Activated CD4-positive, alpha-beta memory T cell treated with anti-CD3 and anti-CD28 coated beads, Interleukin-2, amount 10 ng/mL, durations not matched to agents 7 days and 5 days (primary cell): ENCODE measurements at regions of chr3 and their contacts with region 1.

Region 1: DNA sequence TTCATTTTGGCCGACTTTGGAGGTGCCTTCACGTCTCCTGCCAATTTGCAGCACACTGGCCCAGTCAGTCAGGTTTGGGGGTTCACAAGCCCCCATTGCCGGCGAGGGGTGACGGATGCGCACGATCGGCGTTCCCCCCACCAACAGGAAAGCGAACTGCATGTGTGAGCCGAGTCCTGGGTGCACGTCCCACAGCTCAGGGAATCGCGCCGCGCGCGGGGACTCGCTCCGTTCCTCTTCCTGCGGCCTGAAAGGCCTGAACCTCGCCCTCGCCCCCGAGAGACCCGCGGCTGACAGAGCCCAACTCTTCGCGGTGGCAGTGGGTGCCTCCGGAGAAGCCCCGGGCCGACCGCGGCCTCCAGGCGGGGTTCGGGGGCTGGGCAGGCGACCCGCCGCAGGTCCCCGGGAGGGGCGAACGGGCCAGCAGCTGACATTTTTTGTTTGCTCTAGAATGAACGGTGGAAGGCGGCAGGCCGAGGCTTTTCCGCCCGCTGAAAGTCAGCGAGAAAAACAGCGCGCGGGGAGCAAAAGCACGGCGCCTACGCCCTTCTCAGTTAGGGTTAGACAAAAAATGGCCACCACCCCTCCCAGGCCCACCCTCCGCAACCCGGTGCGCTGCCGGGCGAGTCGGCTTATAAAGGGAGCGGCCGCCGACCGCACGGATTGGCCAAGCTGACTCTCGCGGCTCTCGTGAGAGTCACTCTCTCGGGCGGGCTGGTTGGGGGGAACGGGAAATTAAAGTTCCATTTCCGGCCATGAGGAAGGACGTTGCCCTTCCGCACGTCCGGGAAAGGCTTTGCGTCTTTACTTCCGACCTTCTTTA is at the start of gene TERC:
- DNase-seq: peak; percentile 92
- H3K4me3 Mint-ChIP-seq: peak within 1 kb of the TSS; percentile 96
- H3K27ac Mint-ChIP-seq: peak within 1 kb of the TSS; percentile 97
- H3K4me1 Mint-ChIP-seq: peaks cover 43% of the 10 kb centered on the region
- H3K27me3 Mint-ChIP-seq: no peaks in the 10 kb centered on the region
- total RNA-seq, gene TERC: 1.9 to 4.0 TPM

Region 2: DNA sequence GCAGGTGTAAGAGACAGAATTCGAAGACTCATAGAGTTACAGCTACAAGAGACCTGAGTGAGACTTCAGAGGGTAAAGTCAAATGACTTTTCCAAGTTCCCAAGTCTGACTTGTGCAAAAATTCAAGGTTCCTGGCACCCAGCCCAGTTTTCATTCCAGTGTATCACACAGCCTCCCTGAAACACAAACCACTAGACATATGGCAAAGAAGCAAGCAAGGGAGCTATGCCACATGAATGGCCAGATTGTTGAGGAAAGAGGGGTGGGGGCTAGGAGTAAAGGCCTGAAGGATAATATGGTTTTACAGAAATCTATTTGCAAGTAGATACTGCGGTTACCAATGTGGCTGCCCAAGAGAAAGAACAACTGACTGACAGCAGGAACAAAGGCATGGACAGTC is 402.4 kb before region 1 on chr3:
- CTCF ChIA-PET with region 1: no interaction called
- POLR2A ChIA-PET with region 1: no interaction called
- DNase-seq: no peak
- H3K4me3 Mint-ChIP-seq: no peak overlapping the region
- H3K27ac Mint-ChIP-seq: no peak overlapping the region
- H3K4me1 Mint-ChIP-seq: no peaks in the 10 kb centered on the region
- H3K27me3 Mint-ChIP-seq: no peaks in the 10 kb centered on the region

Region 3: GRCh38 chr3:169780742-169781141 is 16.1 kb after region 1 on chr3:
- CTCF ChIA-PET with region 1: interaction called, 7 read pairs
- POLR2A ChIA-PET with region 1: interaction called, 13 read pairs
- DNase-seq: peak; percentile 37
- H3K4me3 Mint-ChIP-seq: peak overlapping the region; percentile 56
- H3K27ac Mint-ChIP-seq: peak overlapping the region; percentile 79
- H3K4me1 Mint-ChIP-seq: peaks cover 54% of the 10 kb centered on the region
- H3K27me3 Mint-ChIP-seq: no peaks in the 10 kb centered on the region

Region 4: DNA sequence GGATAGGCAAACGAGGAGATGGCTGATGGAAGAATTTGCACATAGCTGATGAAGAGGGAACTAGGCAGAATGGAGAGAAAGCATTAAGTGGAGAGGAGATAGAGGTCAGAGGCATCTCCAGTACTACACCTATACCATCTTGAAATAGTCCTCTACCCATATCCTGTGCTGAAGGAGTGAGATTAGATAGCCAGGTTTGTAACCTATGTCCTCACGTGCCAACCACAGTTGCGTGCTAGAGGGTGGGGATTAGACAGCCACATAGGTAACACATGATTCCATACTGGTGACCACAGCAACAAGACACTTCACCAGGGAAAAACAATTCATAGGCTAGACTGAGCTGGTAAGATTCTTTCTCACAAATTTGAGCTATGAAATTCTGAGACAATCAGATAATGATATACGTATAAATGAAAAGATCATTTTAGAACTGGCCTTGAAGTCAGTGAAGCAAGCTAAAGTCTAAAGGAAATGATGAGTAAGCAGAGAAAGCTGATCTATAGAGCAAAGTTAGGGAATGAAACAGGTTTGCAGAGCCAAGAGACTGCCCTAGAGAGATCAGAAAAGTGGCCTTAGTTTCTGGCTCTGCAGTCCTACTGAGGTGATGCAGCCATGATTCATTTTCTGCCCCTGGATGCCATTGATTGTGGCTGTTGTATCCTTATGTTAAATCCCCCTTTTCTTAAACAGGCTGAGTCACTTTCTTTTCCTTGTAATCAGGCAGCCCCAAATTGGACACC is 26.2 kb after region 1 on chr3:
- CTCF ChIA-PET with region 1: no interaction called
- POLR2A ChIA-PET with region 1: no interaction called
- DNase-seq: no peak
- H3K4me3 Mint-ChIP-seq: no peak overlapping the region
- H3K27ac Mint-ChIP-seq: no peak overlapping the region
- H3K4me1 Mint-ChIP-seq: peaks cover 27% of the 10 kb centered on the region
- H3K27me3 Mint-ChIP-seq: no peaks in the 10 kb centered on the region

Region 5: DNA sequence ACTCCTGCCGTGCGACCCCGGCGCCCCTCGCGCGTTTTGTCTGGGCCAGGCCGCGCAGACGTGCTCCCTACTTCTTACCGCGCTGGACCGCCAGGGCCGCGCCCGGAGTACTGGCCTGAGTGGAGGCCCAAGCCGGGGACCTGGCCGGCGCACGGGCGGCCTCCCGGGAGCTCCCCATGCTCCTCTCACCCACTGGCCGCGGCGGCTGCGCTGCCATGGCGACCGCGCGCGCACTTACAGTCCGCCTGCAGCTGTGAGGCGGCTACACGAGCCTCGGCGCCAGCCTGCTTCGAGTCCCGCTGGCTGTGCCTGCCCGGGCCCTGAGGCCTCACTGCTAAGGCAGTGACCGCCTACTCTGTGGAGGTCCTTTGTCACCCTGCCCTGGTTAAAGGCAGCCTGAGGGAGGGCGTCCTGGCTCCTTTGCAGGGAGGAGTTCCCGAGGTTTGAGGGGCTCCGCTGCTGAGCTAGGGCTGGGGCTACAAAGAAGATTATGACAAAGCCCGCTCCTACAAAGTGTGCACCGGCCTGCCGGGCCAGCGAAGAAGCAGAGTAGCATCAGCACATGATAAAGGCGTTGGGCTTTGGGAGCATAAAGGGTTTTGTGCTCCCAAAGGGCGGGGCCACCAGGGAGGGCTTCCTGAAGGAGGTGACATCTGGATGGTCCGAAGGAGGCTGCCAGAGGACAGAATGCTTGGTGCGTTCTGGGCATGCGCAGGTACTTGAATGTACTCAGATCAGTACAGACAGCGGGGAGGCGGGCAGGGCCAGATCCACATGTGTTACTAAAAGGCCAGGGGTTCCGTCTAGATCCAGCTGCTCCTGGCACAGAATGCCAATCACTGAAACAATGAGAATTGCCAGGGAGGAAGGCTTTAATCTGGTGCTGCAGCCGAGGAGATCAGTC is 47.9 kb after region 1 on chr3 and contains the starts of genes LRRC34 and LRRIQ4:
- CTCF ChIA-PET with region 1: interaction called, 4 read pairs
- POLR2A ChIA-PET with region 1: interaction called, 30 read pairs
- DNase-seq: peak; percentile 85
- H3K4me3 Mint-ChIP-seq: peak within 1 kb of the TSS; percentile 70
- H3K27ac Mint-ChIP-seq: peak within 1 kb of the TSS; percentile 83
- H3K4me1 Mint-ChIP-seq: peaks cover 53% of the 10 kb centered on the region
- H3K27me3 Mint-ChIP-seq: peaks cover 13% of the 10 kb centered on the region
- total RNA-seq, gene LRRC34: 5.6 to 6.0 TPM
- total RNA-seq, gene LRRIQ4: not detected

Region 6: DNA sequence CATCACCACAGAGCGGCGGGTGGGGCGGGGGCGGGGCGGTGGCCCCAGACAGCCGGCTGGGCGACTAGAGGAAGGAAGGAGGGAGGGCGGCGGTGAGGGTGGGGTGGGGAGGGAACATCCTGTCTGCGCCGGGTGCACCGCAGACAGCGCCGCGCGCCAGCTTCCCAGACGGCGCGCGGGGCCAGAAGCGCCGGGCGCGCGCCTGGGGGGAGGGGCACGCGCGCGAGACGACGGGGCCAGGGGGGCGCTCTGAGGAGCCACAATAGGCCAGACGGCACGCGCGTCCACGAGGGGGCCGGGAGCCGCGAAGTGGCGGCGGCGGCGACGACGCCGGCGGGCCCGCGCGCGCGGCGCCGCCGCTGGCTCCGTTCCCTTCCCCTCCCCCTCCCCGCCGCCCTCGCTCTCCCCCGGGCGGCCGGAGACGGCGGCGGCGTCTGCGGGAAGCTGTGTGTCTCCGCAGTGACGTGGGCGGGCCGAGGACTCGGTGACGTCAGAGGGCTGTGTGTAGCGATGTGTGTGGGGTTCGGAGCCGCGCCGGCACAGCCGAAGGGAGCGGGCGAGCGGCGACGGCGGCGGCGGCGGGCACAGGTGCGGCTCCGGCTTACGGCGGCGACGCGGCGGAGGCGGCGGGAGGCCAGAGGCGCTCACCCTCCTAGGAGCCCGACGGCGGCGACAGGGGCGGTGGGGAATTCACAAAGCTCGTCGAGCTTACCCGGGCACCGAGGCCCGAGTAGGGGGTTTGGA is 592.7 kb after region 1 on chr3 and contains the start of gene SKIL:
- CTCF ChIA-PET with region 1: no interaction called
- POLR2A ChIA-PET with region 1: interaction called, 12 read pairs
- DNase-seq: peak; percentile 95
- H3K4me3 Mint-ChIP-seq: peak within 1 kb of the TSS; percentile 84
- H3K27ac Mint-ChIP-seq: peak within 1 kb of the TSS; percentile 95
- H3K4me1 Mint-ChIP-seq: peaks cover 41% of the 10 kb centered on the region
- H3K27me3 Mint-ChIP-seq: peaks cover 5% of the 10 kb centered on the region
- total RNA-seq, gene SKIL: 18.0 to 19.0 TPM